ENCODE measurements at regions of chr5 and their contacts with region 1.

Region 1: DNA sequence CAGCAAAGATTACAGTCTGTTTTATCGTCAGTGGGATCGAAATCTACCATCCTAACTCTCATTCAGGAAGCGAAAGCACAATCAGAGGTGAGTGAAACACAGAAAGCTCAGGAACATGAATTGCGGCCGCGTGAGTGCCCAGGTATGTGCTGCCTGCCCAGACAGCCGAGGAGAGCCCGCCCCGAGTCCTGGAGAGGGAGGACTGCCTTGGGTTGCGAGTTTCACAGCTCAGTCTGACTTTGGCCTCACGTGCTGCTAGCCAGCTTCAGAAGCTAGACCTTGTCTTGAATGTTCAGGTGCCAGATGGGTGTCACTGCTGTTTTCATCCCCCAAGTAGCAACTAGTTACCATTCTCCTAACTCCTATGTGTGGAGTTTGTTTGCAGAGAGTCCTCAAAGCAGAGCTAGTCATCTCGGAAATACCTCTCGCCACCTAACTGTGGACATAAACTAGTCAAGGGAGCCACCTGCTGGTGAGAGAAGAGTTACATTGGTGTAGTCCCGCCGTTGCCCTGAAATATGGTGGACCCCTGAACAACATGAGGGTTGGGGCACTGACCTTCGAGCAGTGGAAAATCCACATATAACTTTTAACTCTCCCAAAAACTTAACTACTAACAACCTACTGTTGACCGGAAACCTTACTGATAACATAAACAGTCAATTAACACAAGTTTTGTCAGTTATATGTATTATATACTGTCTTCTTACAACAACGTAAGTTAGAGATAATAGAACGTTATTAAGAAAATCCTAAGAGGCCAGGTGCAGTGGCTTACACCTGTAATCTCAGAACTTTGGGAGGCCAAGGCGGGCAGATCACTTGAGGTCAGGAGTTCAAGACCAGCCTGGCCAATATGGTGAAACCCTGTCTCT is 80.9 kb downstream of the GOLPH3 start:
- DNase-seq: peak; percentile 87
- CTCF ChIP-seq: peak; percentile 78

Region 2: DNA sequence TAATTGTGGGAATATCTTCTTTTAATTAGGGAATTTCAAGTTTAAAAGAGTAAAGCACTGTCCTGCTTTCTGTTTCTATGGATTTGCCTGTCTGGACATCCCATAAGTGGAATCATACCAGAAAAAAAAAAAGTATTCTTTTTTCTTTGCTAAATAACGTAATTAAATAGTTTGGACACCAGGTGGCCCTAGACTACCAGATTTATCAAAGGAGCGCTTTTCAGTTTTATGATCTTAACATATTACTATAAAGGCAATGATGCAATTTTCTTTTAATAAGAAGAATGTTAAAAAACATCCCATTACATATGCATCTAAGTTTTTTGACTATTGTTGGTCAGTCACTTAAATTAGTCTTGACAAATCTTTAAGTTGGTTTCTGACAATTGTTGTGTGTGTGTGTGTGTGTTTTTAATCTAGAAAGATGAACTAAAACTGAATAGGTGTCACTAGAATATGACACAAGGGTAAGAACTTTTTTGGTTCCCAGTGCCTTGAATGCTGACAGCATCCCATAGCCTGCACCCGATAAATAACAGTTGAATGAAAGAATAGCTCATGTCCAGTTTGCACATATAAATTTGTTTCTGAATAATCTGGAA is 511.6 kb before region 1 on chr5:
- in situ Hi-C with region 1: loop called (anchors 25 kb)
- DNase-seq: no peak
- CTCF ChIP-seq: peak; percentile 50

Region 3: DNA sequence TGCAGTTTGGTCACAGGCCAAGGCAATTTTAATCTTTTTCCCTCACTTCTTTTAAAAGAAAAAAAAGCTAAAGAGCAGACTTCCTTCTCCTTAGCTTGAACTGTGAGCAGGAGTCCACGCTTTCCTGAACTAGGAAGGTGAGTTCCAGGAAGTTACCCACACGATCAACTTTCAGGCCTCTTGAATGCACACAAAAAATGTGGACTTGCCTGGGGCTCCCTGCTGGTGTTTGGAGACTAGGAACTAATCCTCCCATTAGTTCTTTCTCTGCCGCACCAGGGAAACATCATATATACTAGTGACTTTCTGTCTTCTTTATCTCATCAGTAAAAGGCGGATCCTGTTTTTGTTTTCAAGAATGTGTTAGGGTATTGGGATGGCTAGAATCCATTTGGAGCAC is 159.0 kb before region 1 on chr5:
- in situ Hi-C with region 1: no loop called
- DNase-seq: no peak
- CTCF ChIP-seq: no peak